PC-3 (cell line): ENCODE measurements at regions of chr14 and their contacts with region 1.

Region 1: DNA sequence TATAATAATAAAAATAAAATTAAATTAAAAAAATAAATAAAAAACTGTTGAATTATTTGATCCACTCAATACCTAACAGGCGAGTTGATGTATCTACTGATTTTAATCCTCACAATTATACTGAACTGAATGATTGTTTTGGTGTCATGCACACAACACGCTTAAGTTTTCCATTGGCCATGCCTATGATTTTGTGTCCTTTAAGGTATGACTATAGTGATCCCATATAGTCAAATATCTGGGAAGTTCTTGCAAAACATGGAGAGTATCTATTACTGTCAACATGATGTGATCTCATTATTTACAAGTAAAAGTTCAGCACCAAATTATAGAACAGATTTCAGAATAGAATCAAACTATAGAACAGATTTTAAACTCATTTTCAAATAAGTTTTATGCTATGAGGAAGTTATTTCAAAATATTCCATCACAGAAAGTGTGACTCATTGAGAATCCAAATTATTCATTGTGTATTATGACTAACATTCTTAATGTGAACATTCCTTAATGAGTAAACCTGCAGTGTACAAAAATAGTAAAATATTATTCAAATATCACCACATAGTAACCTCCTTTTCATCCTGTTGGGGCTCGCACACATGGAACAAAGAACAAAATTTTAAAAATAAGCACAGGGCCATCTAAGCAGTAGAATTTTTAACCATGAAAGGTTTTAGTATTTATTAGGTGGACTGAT is 190.4 kb downstream of the SLC25A21 start:
- DNase-seq: peak; percentile 93
- ATAC-seq: peak; percentile 92
- H3K4me3 ChIP-seq: no peak overlapping the region
- H3K27ac ChIP-seq: peak overlapping the region; percentile 91
- H3K4me1 ChIP-seq: peaks cover 27% of the 10 kb centered on the region
- H3K27me3 ChIP-seq: no peaks in the 10 kb centered on the region
- CTCF ChIP-seq: no peak

Region 2: GRCh38 chr14:36773136-36773540 is 208.8 kb before region 1 on chr14:
- CTCF ChIA-PET with region 1: no interaction called
- POLR2A ChIA-PET with region 1: no interaction called
- intact Hi-C with region 1: loop called (anchors 1 kb)
- DNase-seq: peak; percentile 76
- ATAC-seq: peak; percentile 94
- H3K4me3 ChIP-seq: no peak overlapping the region
- H3K27ac ChIP-seq: no peak overlapping the region
- H3K4me1 ChIP-seq: peaks cover 15% of the 10 kb centered on the region
- H3K27me3 ChIP-seq: no peaks in the 10 kb centered on the region
- CTCF ChIP-seq: peak; percentile 71

Region 3: DNA sequence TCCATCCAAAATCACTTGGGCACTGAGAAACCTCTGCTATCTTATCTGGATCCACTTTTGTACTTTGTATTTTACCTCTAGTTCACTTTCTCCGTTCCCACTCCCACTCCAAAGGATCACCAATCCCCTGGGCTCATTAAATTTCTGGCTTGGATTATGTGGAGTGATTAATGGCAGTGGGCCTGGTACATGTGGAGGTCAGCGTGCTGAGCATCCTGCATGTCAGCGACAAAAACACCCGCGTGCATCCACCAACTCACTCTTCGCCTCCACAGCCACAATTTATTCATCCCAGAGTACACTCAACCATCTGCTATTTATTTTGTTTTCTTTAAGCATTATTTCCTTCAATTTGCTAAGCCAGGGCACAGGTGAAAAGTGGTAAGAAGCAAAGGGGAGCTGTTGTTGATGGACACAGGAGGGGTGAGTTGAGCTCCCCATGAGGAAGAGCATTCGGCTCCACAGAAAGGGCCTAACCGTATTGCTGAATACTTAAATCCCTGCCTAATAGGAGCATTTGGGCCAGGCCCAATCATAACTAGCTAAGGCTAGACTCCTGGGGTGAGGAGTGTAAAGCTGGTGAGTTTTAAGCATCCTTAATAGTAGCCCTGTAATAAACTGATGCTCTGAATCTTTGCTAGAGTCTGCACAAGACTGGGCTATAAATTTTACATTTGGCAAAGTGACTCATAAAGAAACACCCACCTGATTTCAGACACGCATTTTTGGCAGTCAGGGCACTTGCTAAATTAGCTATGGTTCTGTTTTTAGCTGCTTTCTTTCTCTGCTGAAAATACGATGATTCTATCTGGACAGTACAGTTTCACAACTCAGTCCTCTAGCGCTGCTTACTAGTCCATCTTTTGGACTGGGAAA is 52.7 kb after region 1 on chr14:
- CTCF ChIA-PET with region 1: no interaction called
- POLR2A ChIA-PET with region 1: no interaction called
- intact Hi-C with region 1: loop called (anchors 2 kb)
- DNase-seq: no peak
- ATAC-seq: no peak
- H3K4me3 ChIP-seq: no peak overlapping the region
- H3K27ac ChIP-seq: no peak overlapping the region
- H3K4me1 ChIP-seq: peaks cover 30% of the 10 kb centered on the region
- H3K27me3 ChIP-seq: no peaks in the 10 kb centered on the region
- CTCF ChIP-seq: no peak

Region 4: GRCh38 chr14:37048666-37049071 is 66.7 kb after region 1 on chr14:
- CTCF ChIA-PET with region 1: no interaction called
- POLR2A ChIA-PET with region 1: no interaction called
- intact Hi-C with region 1: loop called (anchors 2 kb)
- DNase-seq: peak; percentile 94
- ATAC-seq: peak; percentile 89
- H3K4me3 ChIP-seq: peak overlapping the region; percentile 29; the same call in 1 of the 2 replicates
- H3K27ac ChIP-seq: peak overlapping the region; percentile 77
- H3K4me1 ChIP-seq: peaks cover 34% of the 10 kb centered on the region
- H3K27me3 ChIP-seq: no peaks in the 10 kb centered on the region
- CTCF ChIP-seq: no peak